ENCODE measurements at regions of chr9 and their contacts with region 1.

Region 1: GRCh38 chr9:98034593-98035546 is 21.7 kb upstream of the NANS start:
- DNase-seq: no peak
- H3K4me3 ChIP-seq: no peak overlapping the region
- CTCF ChIP-seq: peak; percentile 80

Region 2: GRCh38 chr9:98016137-98016680 is 18.7 kb before region 1 on chr9:
- CTCF ChIA-PET with region 1: interaction called, 45 read pairs
- POLR2A ChIA-PET with region 1: no interaction called
- DNase-seq: no peak
- H3K4me3 ChIP-seq: no peak overlapping the region
- CTCF ChIP-seq: no peak

Region 3: DNA sequence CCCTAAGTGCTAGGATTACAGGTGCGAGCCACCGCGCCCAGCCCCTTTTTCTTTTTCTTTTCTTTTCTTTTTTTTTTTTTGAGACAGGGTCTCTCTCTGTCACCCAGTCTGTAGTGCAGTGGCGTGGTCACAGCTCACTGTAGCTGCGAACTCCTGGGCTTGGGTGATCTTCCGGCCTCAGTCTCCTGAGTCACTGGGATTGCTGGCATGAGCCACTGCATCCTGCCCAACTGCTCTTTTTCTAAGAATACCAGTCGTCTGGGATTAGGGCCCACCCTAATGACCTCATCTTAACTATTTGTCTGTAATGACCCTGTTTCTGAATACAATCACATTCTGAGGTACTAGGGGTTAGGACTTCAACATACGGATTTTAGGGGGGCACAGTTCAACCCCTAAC is 12.4 kb before region 1 on chr9:
- CTCF ChIA-PET with region 1: interaction called, 45 read pairs
- POLR2A ChIA-PET with region 1: no interaction called
- DNase-seq: no peak
- H3K4me3 ChIP-seq: no peak overlapping the region
- CTCF ChIP-seq: no peak

Region 4: GRCh38 chr9:98045234-98046179 is 10.6 kb after region 1 on chr9:
- CTCF ChIA-PET with region 1: interaction called, 24 read pairs
- POLR2A ChIA-PET with region 1: no interaction called
- DNase-seq: no peak
- H3K4me3 ChIP-seq: no peak overlapping the region
- CTCF ChIP-seq: no peak

Region 5: DNA sequence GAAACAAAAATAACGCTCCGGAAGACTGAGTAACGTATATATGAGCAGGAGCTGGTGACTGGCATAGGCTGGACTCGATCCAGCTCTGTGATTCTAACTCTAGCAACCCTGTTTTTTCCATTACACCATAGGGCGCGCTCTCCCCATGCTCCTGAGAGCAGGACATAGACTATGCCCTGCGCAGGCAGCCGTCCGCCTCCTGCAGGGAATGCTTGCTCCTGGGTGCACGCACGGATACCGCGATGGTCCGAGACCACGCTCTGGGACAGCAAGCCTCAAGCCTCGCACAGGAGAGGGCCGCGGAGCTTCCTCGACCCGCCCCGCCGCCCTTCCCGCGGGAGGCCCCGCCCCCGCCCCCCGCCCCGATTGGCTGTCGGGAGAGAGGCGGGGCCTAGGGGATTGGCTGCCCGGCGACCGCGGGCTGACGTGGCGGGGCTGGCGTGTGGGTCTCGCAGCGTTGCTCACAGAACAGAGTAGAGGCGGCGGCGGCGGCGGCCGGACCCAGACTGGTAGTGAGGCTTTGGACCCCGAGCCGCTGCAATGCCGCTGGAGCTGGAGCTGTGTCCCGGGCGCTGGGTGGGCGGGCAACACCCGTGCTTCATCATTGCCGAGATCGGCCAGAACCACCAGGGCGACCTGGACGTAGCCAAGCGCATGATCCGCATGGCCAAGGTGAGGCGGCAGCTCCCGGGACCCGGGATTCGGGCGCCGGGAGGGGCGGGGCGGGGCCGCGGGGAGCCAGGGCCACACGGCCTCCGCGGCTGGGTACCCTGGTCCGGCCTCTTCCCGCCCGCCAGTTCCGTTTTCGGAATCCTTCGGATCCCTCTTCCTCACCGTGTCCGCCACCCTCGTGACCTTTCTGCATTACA is 21.6 kb after region 1 on chr9 and contains the start of gene NANS:
- CTCF ChIA-PET with region 1: interaction called, 15 read pairs
- POLR2A ChIA-PET with region 1: interaction called, 3 read pairs
- DNase-seq: peak; percentile 76
- H3K4me3 ChIP-seq: peak within 1 kb of the TSS; percentile 89
- CTCF ChIP-seq: peak; percentile 16

Measured in AG04449 (cell line).